ENCODE measurements at regions of chr3 and their contacts with region 1.

Region 1: GRCh38 chr3:11335056-11335608 is 62.9 kb downstream of the ATG7 start:
- DNase-seq: no peak
- H3K4me3 ChIP-seq: no peak overlapping the region
- H3K27ac ChIP-seq: no peak overlapping the region
- H3K4me1 ChIP-seq: no peaks in the 10 kb centered on the region
- H3K27me3 ChIP-seq: no peaks in the 10 kb centered on the region
- CTCF ChIP-seq: peak; percentile 57 to 86 (median 69)
- POLR2A ChIP-seq: no peak

Region 2: GRCh38 chr3:11001020-11001656 is 334.0 kb before region 1 on chr3:
- intact Hi-C with region 1: loop called (anchors 5 kb)
- DNase-seq: no peak
- H3K4me3 ChIP-seq: no peak overlapping the region
- H3K27ac ChIP-seq: no peak overlapping the region
- H3K4me1 ChIP-seq: no peaks in the 10 kb centered on the region
- H3K27me3 ChIP-seq: no peaks in the 10 kb centered on the region
- CTCF ChIP-seq: no peak
- POLR2A ChIP-seq: no peak

Region 3: DNA sequence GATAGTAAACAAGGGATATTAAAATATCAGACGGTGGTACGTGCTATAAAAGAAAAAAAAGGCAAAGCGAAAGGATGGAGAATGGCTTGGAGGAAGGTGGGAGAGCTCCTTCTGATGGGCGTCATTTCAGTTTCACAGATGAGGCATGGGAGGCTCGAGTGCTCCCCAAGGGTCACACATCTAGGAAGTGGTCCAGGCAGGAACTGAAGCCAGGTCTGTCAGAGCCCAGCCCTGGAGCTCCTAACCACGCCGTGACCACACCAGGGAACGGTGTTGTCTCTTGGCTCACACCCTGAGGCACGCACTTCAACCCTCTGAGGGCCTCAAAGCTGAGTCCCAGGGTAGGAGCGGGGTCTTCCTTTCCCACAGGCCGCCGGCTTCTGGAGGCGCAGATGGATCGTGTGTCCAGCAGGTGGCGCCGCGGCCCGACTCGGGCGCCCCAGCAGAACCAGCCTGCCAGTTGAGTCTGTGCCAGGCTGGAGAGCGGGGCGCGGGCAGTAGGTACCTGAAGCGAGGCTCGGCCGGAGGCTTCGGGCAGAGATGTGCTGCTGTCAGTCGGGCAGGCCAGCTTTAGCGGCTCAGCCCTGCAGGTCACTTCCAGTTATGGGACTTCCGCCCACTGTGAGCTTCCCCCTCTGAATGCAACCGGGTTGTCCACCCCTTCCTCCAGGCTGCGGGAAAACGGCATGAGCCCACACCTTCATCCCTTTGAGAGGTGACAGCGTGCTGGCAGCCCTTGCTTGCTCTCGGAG is 274.5 kb before region 1 on chr3:
- intact Hi-C with region 1: loop called (anchors 10 kb)
- DNase-seq: peak; percentile 43 to 67
- H3K4me3 ChIP-seq: peak overlapping the region in 1 of 2 donors; percentile 8
- H3K27ac ChIP-seq: no peak overlapping the region
- H3K4me1 ChIP-seq: no peaks in the 10 kb centered on the region
- H3K27me3 ChIP-seq: no peaks in the 10 kb centered on the region
- CTCF ChIP-seq: peak; percentile 82 to 88 (median 86)
- POLR2A ChIP-seq: no peak

Region 4: GRCh38 chr3:11168881-11169805 is 166.0 kb before region 1 on chr3:
- intact Hi-C with region 1: no loop called
- DNase-seq: no peak
- H3K4me3 ChIP-seq: no peak overlapping the region
- H3K27ac ChIP-seq: no peak overlapping the region
- H3K4me1 ChIP-seq: no peaks in the 10 kb centered on the region
- H3K27me3 ChIP-seq: no peaks in the 10 kb centered on the region
- CTCF ChIP-seq: no peak
- POLR2A ChIP-seq: no peak

Measured in uterus (tissue), 4 donors.